Prostate gland (tissue), 2 donors: ENCODE measurements at regions of chr4 and their contacts with region 1.

Region 1: DNA sequence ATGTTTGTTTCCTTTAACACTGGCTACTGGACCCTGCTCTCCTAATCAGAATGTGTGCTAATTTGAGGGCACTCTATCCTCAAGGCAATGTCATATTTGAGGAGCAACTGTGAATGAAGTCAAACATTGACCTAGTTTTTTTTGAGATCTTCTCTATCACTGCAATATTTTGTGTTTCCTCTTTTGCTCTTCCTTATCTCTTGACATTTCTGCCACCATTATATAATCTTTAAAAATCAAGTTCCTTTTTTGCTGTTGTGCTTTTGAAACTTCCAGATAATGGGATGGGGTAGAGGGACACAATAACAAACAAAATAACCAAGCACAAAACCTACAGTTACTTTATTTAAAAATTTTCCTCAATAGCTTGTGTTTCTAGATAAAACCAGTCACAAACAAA is 7.4 kb upstream of the WDFY3 start:
- DNase-seq: no peak
- H3K4me3 ChIP-seq: no peak overlapping the region
- H3K27ac ChIP-seq: no peak overlapping the region
- H3K4me1 ChIP-seq: no peaks in the 10 kb centered on the region
- H3K27me3 ChIP-seq: no peaks in the 10 kb centered on the region
- CTCF ChIP-seq: no peak
- POLR2A ChIP-seq: no peak

Region 2: GRCh38 chr4:84596826-84597225 is 377.0 kb before region 1 on chr4:
- intact Hi-C with region 1: no loop called
- DNase-seq: no peak
- H3K4me3 ChIP-seq: no peak overlapping the region
- H3K27ac ChIP-seq: no peak overlapping the region
- H3K4me1 ChIP-seq: no peaks in the 10 kb centered on the region
- H3K27me3 ChIP-seq: no peaks in the 10 kb centered on the region
- CTCF ChIP-seq: no peak
- POLR2A ChIP-seq: no peak

Region 3: GRCh38 chr4:84750253-84750959 is 223.4 kb before region 1 on chr4:
- intact Hi-C with region 1: loop called (anchors 2 kb)
- DNase-seq: peak; percentile 16
- H3K4me3 ChIP-seq: no peak overlapping the region
- H3K27ac ChIP-seq: no peak overlapping the region
- H3K4me1 ChIP-seq: no peaks in the 10 kb centered on the region
- H3K27me3 ChIP-seq: no peaks in the 10 kb centered on the region
- CTCF ChIP-seq: peak; percentile 42 to 72 (median 68)
- POLR2A ChIP-seq: no peak

Region 4: GRCh38 chr4:85067342-85067741 is 93.5 kb after region 1 on chr4:
- intact Hi-C with region 1: no loop called
- DNase-seq: no peak
- H3K4me3 ChIP-seq: no peak overlapping the region
- H3K27ac ChIP-seq: no peak overlapping the region
- H3K4me1 ChIP-seq: no peaks in the 10 kb centered on the region
- H3K27me3 ChIP-seq: no peaks in the 10 kb centered on the region
- CTCF ChIP-seq: no peak
- POLR2A ChIP-seq: no peak